ENCODE measurements at regions of chr15 and their contacts with region 1.

Region 1: DNA sequence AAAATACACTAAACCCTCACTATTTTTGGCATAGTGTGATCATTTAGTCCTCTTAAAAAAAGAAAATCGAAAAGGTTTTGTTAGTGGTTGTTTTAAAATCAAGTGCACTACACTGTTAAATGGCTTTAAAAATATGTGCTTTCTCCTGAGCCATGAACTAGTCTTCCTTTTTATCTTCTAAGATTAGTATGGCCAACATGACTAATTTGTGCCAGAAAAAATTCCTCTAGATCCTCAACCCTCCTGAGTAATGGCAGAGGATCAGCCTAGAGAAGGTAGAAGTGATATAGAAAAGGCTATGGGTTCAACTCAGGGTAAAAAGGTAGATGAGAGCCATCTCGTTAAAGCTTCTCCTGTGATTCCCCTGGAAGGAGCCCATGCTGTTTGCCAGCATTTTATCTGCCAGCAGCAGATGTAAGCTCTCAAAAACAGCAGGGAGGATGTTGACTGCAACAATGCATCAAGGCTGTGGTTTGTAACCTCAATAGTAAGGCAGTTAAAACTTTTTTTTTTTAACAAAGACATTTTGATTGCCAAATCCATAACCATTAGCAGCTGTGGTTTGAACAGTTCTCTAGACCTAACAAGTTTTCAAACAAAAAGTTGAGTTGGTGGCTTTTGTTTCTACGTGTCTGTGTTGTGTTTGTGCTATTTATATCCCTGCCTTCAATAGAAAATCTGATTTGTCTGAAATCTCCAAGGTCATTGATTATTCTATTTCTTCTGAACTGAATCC is 30.2 kb upstream of the ZNF609 start:
- DNase-seq: peak; percentile 19
- H3K4me3 ChIP-seq: no peak overlapping the region
- H3K27ac ChIP-seq: peak overlapping the region; percentile 14 to 54 (median 47)
- H3K4me1 ChIP-seq: peaks cover 0 to 9% (median 0%) of the 10 kb centered on the region in 4 donors
- H3K27me3 ChIP-seq: no peaks in the 10 kb centered on the region
- CTCF ChIP-seq: no peak
- EP300 ChIP-seq: no peak
- POLR2A ChIP-seq: no peak

Region 2: DNA sequence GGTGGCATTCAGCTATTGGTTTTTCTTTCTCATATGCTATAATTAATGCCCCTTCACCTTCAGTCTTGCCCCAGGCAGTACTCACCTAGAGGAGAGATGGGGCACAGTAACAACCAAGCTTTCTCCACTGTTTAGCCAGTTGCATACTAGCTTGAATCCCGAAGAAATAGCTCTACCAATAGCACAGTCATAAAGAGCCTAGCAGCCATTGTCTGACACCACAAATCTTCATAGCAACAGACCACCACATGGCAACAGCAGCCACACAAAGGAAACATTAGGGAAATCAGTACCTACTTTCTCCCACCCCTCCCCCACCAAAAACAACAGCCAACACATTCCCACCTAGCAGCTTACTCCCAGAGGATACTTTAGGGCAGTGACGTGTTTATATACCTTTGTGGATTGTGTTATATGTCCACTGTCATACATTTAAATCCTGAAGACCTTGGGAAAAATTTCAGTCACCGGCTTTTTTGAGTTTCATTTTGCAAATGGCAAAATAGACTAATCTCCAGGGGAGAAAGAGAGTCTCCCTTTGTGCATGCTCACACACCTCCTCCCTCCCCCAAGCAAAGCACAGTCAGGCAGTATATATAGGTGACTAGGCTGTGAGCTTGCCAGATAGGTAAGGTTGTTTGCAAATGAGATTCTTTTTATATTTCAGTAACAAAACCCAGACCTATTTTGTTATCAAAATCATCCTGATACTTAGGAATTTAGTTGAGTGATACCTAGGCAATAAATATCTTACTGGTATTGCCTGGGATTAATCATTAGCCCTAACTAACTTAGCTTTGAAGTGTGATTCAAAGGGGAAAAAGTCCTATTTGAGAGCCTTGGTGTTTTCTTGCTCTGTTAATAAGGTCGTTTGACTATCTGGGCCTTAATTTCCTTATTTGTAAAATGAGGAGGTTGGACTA is 204.7 kb after region 1 on chr15:
- in situ Hi-C with region 1: loop called in 1 of 4 experiments (anchors 25 kb)
- intact Hi-C with region 1: no loop called
- DNase-seq: no peak
- H3K4me3 ChIP-seq: no peak overlapping the region
- H3K27ac ChIP-seq: peak overlapping the region; percentile 51 to 72 (median 61)
- H3K4me1 ChIP-seq: peaks cover 6 to 61% (median 39%) of the 10 kb centered on the region in 4 donors
- H3K27me3 ChIP-seq: no peaks in the 10 kb centered on the region
- CTCF ChIP-seq: no peak
- EP300 ChIP-seq: no peak
- POLR2A ChIP-seq: no peak

Region 3: GRCh38 chr15:64651573-64652260 is 221.5 kb after region 1 on chr15:
- in situ Hi-C with region 1: loop called (anchors 10 to 25 kb)
- intact Hi-C with region 1: no loop called
- DNase-seq: no peak
- H3K4me3 ChIP-seq: no peak overlapping the region
- H3K27ac ChIP-seq: peak overlapping the region; percentile 7 to 39 (median 20)
- H3K4me1 ChIP-seq: peaks cover 0 to 41% (median 8%) of the 10 kb centered on the region in 4 donors
- H3K27me3 ChIP-seq: no peaks in the 10 kb centered on the region
- CTCF ChIP-seq: no peak
- EP300 ChIP-seq: no peak
- POLR2A ChIP-seq: no peak